CD8-positive, alpha-beta memory T cell (primary cell): ENCODE measurements at regions of chr1 and their contacts with region 1.

Region 1: GRCh38 chr1:181424786-181425403 is 58.4 kb upstream of the CACNA1E start:
- DNase-seq: peak; percentile 31 to 75 (median 46)
- H3K4me3 ChIP-seq: peak overlapping the region; percentile 36
- H3K4me3 Mint-ChIP-seq: peak overlapping the region in 6 of 7 donors; percentile 46 to 78 (median 68)
- H3K27ac ChIP-seq: no peak overlapping the region
- H3K27ac Mint-ChIP-seq: peak overlapping the region in 2 of 8 donors; percentile 52 to 58
- H3K4me1 ChIP-seq: peaks cover 18% of the 10 kb centered on the region
- H3K4me1 Mint-ChIP-seq: peaks cover 7 to 12% (median 9%) of the 10 kb centered on the region in 3 donors
- H3K27me3 ChIP-seq: no peaks in the 10 kb centered on the region
- H3K27me3 Mint-ChIP-seq: peaks cover 19 to 22% of the 10 kb centered on the region in 2 donors

Region 2: GRCh38 chr1:181184621-181185020 is 240.3 kb before region 1 on chr1:
- CTCF ChIA-PET with region 1: interaction called, 89 read pairs
- POLR2A ChIA-PET with region 1: no interaction called
- DNase-seq: no peak
- H3K4me3 ChIP-seq: no peak overlapping the region
- H3K4me3 Mint-ChIP-seq: no peak overlapping the region
- H3K27ac ChIP-seq: no peak overlapping the region
- H3K27ac Mint-ChIP-seq: no peak overlapping the region
- H3K4me1 ChIP-seq: peaks cover 12% of the 10 kb centered on the region
- H3K4me1 Mint-ChIP-seq: peaks cover 8 to 10% (median 8%) of the 10 kb centered on the region in 3 donors
- H3K27me3 ChIP-seq: no peaks in the 10 kb centered on the region
- H3K27me3 Mint-ChIP-seq: peaks cover 31 to 43% of the 10 kb centered on the region in 2 donors

Region 3: DNA sequence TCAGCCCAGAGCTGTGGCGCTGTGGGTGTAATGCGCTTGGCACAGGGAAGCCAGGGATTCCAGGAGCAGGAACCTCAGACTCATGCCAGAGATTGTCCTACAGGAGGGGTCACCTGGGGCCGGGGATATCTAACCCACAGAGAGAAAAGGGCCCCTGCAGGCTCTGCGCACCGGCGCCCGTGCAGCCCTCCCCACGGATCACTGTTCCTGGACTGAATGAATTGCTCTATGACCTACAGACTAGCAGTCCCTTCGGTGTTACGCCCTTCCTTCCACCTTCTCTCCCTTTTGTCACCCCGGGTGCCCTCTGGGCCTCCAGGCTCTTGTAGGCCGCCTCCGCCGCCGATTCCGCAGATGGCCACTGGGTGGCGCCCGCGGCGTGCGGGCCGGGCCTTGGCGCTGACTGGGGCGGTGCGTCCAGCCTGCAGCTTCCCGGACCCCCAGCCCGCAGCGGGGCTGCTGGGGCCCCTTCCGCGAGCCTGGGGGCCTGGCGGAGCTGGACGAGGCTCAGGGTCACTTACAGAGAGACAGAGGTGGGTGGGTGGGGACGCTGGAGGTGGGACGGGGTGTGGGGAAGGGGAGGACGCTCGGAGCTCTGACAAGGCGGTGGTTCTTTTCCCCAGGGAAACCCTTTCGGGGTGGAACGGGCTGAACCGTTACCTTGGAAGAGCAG is 235.1 kb before region 1 on chr1:
- CTCF ChIA-PET with region 1: interaction called, 89 read pairs
- POLR2A ChIA-PET with region 1: no interaction called
- DNase-seq: peak; percentile 57 to 79 (median 63)
- H3K4me3 ChIP-seq: no peak overlapping the region
- H3K4me3 Mint-ChIP-seq: peak overlapping the region in 2 of 7 donors; percentile 32 to 55
- H3K27ac ChIP-seq: no peak overlapping the region
- H3K27ac Mint-ChIP-seq: no peak overlapping the region
- H3K4me1 ChIP-seq: peaks cover 5% of the 10 kb centered on the region
- H3K4me1 Mint-ChIP-seq: peaks cover 0 to 9% (median 4%) of the 10 kb centered on the region in 3 donors
- H3K27me3 ChIP-seq: no peaks in the 10 kb centered on the region
- H3K27me3 Mint-ChIP-seq: peaks cover 25 to 55% of the 10 kb centered on the region in 2 donors

Region 4: DNA sequence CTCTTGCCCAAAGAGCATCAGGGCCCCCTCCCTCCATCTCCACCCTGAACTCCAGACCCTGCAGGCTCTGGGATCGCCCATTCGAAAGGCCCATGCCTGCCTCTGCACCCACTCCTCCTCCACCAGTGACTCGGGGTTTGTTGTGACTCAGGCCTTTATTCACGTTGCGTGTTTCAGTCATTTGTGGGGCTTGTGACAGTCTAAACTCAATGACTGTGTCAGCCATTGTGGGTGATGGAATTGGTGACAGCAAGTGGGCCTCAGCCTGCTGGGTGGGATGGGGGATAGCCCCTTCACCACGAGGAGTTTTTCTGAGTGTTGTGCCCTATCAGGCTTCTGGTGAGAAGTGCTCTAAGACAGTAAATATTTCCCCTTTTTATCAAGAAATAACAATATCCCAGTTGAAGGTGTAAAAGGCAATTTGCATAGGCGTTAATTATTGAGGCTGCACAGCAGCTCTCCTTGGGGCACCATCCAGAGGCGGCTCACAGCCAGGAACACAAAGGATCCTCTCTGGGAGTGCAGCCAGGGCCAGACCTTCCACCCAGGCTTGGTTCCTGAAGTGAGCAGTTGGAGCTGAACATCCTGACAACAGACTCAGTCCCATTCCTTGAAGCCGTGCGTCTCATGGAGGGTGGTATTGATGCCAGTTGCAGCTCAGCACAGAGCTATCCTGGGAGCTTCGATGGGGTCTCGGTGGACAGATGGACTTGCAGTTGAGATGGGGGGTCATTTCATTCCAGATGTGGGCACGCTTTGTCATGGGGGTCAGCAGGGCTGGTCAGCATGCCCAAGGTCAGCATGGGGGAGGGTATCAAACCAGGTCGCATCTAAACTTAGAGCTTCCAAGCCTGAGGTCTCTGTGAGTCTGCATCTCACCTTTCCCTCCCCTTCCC is 77.2 kb before region 1 on chr1:
- CTCF ChIA-PET with region 1: no interaction called
- POLR2A ChIA-PET with region 1: no interaction called
- DNase-seq: no peak
- H3K4me3 ChIP-seq: no peak overlapping the region
- H3K4me3 Mint-ChIP-seq: no peak overlapping the region
- H3K27ac ChIP-seq: no peak overlapping the region
- H3K27ac Mint-ChIP-seq: no peak overlapping the region
- H3K4me1 ChIP-seq: peaks cover 10% of the 10 kb centered on the region
- H3K4me1 Mint-ChIP-seq: peaks cover 3 to 6% (median 5%) of the 10 kb centered on the region in 3 donors
- H3K27me3 ChIP-seq: no peaks in the 10 kb centered on the region
- H3K27me3 Mint-ChIP-seq: peaks cover 13% of the 10 kb centered on the region in 2 donors

Region 5: GRCh38 chr1:181397845-181398244 is 27.1 kb before region 1 on chr1:
- CTCF ChIA-PET with region 1: interaction called, 12 read pairs
- POLR2A ChIA-PET with region 1: interaction called, 3 read pairs
- DNase-seq: peak in 2 of 5 donors; percentile 34 to 57
- H3K4me3 ChIP-seq: peak overlapping the region; percentile 38
- H3K4me3 Mint-ChIP-seq: peak overlapping the region in 6 of 7 donors; percentile 41 to 63 (median 54)
- H3K27ac ChIP-seq: no peak overlapping the region
- H3K27ac Mint-ChIP-seq: peak overlapping the region in 7 of 8 donors; percentile 3 to 90 (median 83)
- H3K4me1 ChIP-seq: peaks cover 76% of the 10 kb centered on the region
- H3K4me1 Mint-ChIP-seq: peaks cover 24 to 41% (median 29%) of the 10 kb centered on the region in 3 donors
- H3K27me3 ChIP-seq: no peaks in the 10 kb centered on the region
- H3K27me3 Mint-ChIP-seq: peaks cover 0 to 2% of the 10 kb centered on the region in 2 donors